ENCODE measurements at regions of chr6 and their contacts with region 1.

Region 1: GRCh38 chr6:150395398-150396009 is 26.7 kb downstream of the IYD start:
- DNase-seq: peak; percentile 75
- H3K4me3 Mint-ChIP-seq: no peak overlapping the region
- H3K27ac Mint-ChIP-seq: no peak overlapping the region
- H3K4me1 Mint-ChIP-seq: peaks cover 5% of the 10 kb centered on the region
- H3K27me3 Mint-ChIP-seq: no peaks in the 10 kb centered on the region
- CTCF ChIP-seq: peak; percentile 62

Region 2: GRCh38 chr6:148530394-148530953 is 1865.0 kb before region 1 on chr6:
- CTCF ChIA-PET with region 1: no interaction called
- POLR2A ChIA-PET with region 1: no interaction called
- intact Hi-C with region 1: no loop called
- DNase-seq: peak; percentile 38
- H3K4me3 Mint-ChIP-seq: no peak overlapping the region
- H3K27ac Mint-ChIP-seq: no peak overlapping the region
- H3K4me1 Mint-ChIP-seq: no peaks in the 10 kb centered on the region
- H3K27me3 Mint-ChIP-seq: no peaks in the 10 kb centered on the region
- CTCF ChIP-seq: no peak

Region 3: DNA sequence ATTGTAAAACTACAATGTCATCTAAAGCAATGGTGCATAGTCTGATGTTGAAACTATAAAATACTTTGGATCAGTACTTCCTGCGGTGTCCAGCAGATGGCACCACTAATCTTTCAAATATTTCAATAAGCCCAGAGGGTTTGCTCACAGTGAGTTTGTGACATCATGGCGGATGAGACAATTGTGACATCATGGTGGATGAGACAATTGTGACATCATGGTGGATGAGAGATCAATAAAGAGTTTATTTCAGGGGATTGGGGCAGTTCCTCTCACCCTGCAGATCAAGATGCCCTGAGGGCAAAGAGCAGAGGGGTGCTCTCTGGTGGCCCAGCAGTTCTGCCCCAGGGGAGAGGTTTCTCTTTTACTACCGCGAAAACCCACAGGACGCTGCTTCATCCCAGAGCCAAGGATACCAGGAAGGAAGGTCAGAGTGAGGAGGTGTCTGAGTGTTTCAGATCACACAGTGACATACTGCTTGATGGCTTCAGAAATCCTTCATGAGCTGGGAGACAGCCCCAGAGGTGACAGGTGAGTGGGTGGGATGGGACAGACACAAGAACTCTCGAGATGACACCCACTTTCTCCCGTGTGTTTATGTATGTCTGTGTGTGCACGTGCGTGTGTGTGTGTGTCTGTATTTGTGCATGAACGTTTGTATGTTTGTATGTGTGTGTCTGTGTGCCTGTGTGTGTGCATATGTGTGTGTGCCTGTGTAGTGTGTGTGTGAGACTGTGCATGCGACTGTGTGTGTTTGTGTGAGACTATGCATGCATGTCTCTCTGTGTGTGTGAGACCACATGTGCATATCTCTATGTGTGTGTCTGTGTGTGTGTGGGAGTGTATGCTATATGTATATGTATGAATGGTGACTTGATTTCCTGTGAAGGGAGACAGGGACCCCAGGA is 461.0 kb before region 1 on chr6:
- CTCF ChIA-PET with region 1: interaction called, 4 read pairs
- POLR2A ChIA-PET with region 1: no interaction called
- intact Hi-C with region 1: loop called (anchors 1 kb)
- DNase-seq: peak; percentile 74
- H3K4me3 Mint-ChIP-seq: no peak overlapping the region
- H3K27ac Mint-ChIP-seq: no peak overlapping the region
- H3K4me1 Mint-ChIP-seq: peaks cover 23% of the 10 kb centered on the region
- H3K27me3 Mint-ChIP-seq: peaks cover 22% of the 10 kb centered on the region
- CTCF ChIP-seq: peak; percentile 67

Region 4: DNA sequence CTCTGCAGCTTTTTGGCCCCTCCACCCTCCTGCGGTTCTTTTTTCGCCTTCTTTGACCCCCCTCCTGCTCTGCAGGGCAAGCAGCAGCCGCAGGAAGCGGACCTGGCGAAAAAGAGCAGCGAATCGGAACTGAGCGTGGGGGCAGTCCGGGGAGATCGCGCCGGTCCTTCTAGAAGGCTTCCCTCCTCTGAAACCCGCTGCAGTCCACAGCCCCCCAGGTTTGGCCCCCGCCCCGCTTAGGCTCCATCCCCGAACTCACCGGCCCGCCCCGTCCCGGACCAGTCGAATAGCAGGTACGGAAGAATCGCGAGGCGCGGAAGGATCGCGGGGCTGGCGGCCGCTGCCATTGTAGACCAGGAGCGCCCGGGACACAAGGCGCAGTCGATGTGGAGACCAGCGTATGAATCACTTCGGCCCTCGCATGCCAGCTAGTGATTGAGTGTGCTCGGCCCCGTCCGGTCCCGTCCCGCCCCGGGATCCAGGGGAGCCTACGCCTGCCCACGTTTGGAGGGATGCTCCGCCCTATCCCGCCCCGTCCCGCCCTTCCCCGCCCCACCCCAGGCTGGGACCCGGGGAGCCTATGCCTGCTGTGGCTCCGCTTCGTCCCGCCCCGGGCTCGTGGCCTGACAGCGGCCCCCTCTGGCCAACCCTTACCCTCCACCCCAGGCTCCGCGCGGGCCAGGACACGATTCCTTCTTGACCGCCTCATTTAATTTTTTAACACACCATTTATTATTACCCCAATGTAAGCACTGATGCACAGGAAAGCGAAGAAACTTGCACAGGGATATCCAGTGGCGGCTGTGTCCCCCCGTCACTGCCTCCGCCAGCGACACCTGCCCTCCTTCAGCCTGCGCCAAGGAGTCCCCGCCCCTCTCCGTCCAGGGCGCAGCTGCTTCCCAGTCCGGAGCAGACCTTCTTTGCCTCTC is 326.5 kb before region 1 on chr6 and contains the start of gene ULBP3:
- CTCF ChIA-PET with region 1: interaction called, 207 read pairs
- POLR2A ChIA-PET with region 1: interaction called, 6 read pairs
- intact Hi-C with region 1: loop called (anchors 1 kb)
- DNase-seq: peak; percentile 98
- H3K4me3 Mint-ChIP-seq: peak within 1 kb of the TSS; percentile 77
- H3K27ac Mint-ChIP-seq: no peak within 1 kb of the TSS
- H3K4me1 Mint-ChIP-seq: peaks cover 28% of the 10 kb centered on the region
- H3K27me3 Mint-ChIP-seq: no peaks in the 10 kb centered on the region
- CTCF ChIP-seq: peak; percentile 34
- total RNA-seq, gene ULBP3: 4.9 and 6.3 TPM in 2 replicates

Region 5: DNA sequence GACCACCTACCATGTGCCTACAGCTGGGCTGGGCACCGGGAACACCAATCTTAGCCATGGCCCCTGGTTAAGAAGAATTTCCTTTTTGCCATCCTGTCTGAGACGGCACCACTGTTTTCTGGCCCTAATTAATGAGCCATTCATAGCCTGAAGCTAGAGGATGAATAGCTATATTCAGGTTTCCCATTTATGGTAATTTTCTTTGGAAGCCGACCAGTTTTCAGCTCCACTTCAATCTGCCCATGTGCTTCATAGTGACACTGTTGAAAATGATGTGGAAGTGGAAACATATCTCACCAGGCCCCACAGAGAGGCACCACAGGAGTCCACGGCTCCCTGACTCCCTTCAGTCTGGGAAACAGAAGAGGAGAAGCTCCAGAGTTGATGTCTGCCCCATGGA is 304.0 kb before region 1 on chr6:
- CTCF ChIA-PET with region 1: interaction called, 12 read pairs
- POLR2A ChIA-PET with region 1: no interaction called
- intact Hi-C with region 1: no loop called
- DNase-seq: no peak
- H3K4me3 Mint-ChIP-seq: no peak overlapping the region
- H3K27ac Mint-ChIP-seq: no peak overlapping the region
- H3K4me1 Mint-ChIP-seq: no peaks in the 10 kb centered on the region
- H3K27me3 Mint-ChIP-seq: peaks cover 15% of the 10 kb centered on the region
- CTCF ChIP-seq: no peak

Region 6: GRCh38 chr6:150334790-150335783 is 60.4 kb before region 1 on chr6:
- CTCF ChIA-PET with region 1: interaction called, 12 read pairs
- POLR2A ChIA-PET with region 1: interaction called, 3 read pairs
- intact Hi-C with region 1: loop called (anchors 2 kb)
- DNase-seq: peak; percentile 76
- H3K4me3 Mint-ChIP-seq: no peak overlapping the region
- H3K27ac Mint-ChIP-seq: peak overlapping the region; percentile 4
- H3K4me1 Mint-ChIP-seq: peaks cover 18% of the 10 kb centered on the region
- H3K27me3 Mint-ChIP-seq: no peaks in the 10 kb centered on the region
- CTCF ChIP-seq: peak; percentile 82

Region 7: GRCh38 chr6:150377211-150377781 is 18.2 kb before region 1 on chr6:
- CTCF ChIA-PET with region 1: interaction called, 40 read pairs
- POLR2A ChIA-PET with region 1: no interaction called
- intact Hi-C with region 1: no loop called
- DNase-seq: no peak
- H3K4me3 Mint-ChIP-seq: no peak overlapping the region
- H3K27ac Mint-ChIP-seq: no peak overlapping the region
- H3K4me1 Mint-ChIP-seq: no peaks in the 10 kb centered on the region
- H3K27me3 Mint-ChIP-seq: peaks cover 31% of the 10 kb centered on the region
- CTCF ChIP-seq: no peak